ENCODE measurements at regions of chrX and their contacts with region 1.

Region 1: GRCh38 chrX:37509349-37509748 is 62.1 kb upstream of the LANCL3 start:
- DNase-seq: peak; percentile 28
- ATAC-seq: peak; percentile 71; the same call in 1 of the 2 replicates
- H3K4me3 ChIP-seq: no peak overlapping the region
- H3K27ac ChIP-seq: no peak overlapping the region
- H3K4me1 ChIP-seq: no peaks in the 10 kb centered on the region
- H3K27me3 ChIP-seq: no peaks in the 10 kb centered on the region
- CTCF ChIP-seq: peak; percentile 53; the same call in 1 of the 2 replicates

Region 2: DNA sequence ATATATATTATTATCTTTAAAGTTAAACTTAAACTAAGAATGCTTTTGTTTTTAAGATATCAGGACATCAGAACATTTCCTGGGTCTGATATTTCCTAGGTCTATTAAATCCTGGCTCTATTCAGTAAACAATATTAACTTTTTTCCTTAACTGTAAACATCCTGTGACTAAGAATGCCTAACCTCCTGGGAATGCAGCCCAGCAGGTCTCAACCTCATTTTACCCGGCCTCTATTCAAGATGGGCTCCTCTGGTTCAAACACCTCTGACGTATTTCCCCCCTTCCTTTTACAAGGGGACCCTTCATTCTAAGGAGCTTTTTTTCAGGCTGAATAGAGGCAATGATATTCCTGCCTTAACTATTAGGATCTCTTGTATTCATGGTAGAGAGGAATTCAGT is 373.8 kb after region 1 on chrX:
- CTCF ChIA-PET with region 1: no interaction called
- POLR2A ChIA-PET with region 1: no interaction called
- intact Hi-C with region 1: no loop called
- DNase-seq: peak; percentile 87
- ATAC-seq: peak; percentile 69
- H3K4me3 ChIP-seq: no peak overlapping the region; the same call in 1 of the 2 replicates
- H3K27ac ChIP-seq: peak overlapping the region; percentile 90
- H3K4me1 ChIP-seq: peaks cover 62% of the 10 kb centered on the region
- H3K27me3 ChIP-seq: no peaks in the 10 kb centered on the region
- CTCF ChIP-seq: no peak

Region 3: GRCh38 chrX:37926700-37927099 is 417.4 kb after region 1 on chrX:
- CTCF ChIA-PET with region 1: no interaction called
- POLR2A ChIA-PET with region 1: no interaction called
- intact Hi-C with region 1: no loop called
- DNase-seq: peak; percentile 69
- ATAC-seq: peak; percentile 39; the same call in 1 of the 2 replicates
- H3K4me3 ChIP-seq: no peak overlapping the region
- H3K27ac ChIP-seq: no peak overlapping the region
- H3K4me1 ChIP-seq: peaks cover 14% of the 10 kb centered on the region
- H3K27me3 ChIP-seq: no peaks in the 10 kb centered on the region
- CTCF ChIP-seq: peak; percentile 80

Region 4: GRCh38 chrX:38175140-38175539 is 665.8 kb after region 1 on chrX:
- CTCF ChIA-PET with region 1: no interaction called
- POLR2A ChIA-PET with region 1: no interaction called
- intact Hi-C with region 1: loop called (anchors 1 kb)
- DNase-seq: peak; percentile 66
- ATAC-seq: peak; percentile 93
- H3K4me3 ChIP-seq: no peak overlapping the region
- H3K27ac ChIP-seq: no peak overlapping the region
- H3K4me1 ChIP-seq: no peaks in the 10 kb centered on the region
- H3K27me3 ChIP-seq: no peaks in the 10 kb centered on the region
- CTCF ChIP-seq: peak; percentile 77

Measured in PC-3 (cell line).